ENCODE measurements at regions of chr11 and their contacts with region 1.

Region 1: GRCh38 chr11:107741044-107741823 is 29.4 kb upstream of the SLN start:
- DNase-seq: peak; percentile 25
- ATAC-seq: peak; percentile 98
- H3K4me3 ChIP-seq: no peak overlapping the region
- H3K27ac ChIP-seq: no peak overlapping the region
- H3K4me1 ChIP-seq: no peaks in the 10 kb centered on the region
- H3K27me3 ChIP-seq: no peaks in the 10 kb centered on the region
- CTCF ChIP-seq: peak; percentile 80 to 92 (median 87)
- EP300 ChIP-seq: no peak
- POLR2A ChIP-seq: no peak
- RAD21 ChIP-seq: peak; percentile 81

Region 2: GRCh38 chr11:106159836-106160235 is 1581.4 kb before region 1 on chr11:
- CTCF ChIA-PET with region 1: no interaction called
- POLR2A ChIA-PET with region 1: no interaction called
- RAD21 ChIA-PET with region 1: no interaction called
- SMC1A ChIA-PET with region 1: no interaction called
- in situ Hi-C with region 1: no loop called
- intact Hi-C with region 1: no loop called
- DNase-seq: no peak
- ATAC-seq: no peak
- H3K4me3 ChIP-seq: no peak overlapping the region
- H3K27ac ChIP-seq: no peak overlapping the region
- H3K4me1 ChIP-seq: no peaks in the 10 kb centered on the region
- H3K27me3 ChIP-seq: no peaks in the 10 kb centered on the region
- CTCF ChIP-seq: no peak
- EP300 ChIP-seq: no peak
- POLR2A ChIP-seq: no peak
- RAD21 ChIP-seq: no peak

Region 3: DNA sequence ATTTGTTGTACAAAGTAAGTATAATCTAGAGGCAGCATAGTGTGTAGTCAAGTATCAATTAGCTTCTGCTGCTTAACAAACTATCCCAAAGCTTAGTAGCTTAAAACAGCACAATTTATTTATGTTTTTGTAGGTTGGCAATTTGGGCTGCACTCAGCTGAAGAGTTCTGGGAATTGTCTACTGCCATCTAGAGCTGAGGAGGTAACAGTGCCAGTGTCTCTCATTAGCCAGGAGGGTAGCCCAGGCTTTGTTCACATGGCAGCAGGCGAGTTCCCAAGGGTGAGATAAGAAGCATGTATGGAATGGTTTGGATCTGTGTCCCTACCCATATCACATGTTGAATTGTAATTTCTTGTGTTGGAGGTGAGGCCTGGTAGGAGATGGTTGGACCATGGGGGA is 16.4 kb after region 1 on chr11:
- CTCF ChIA-PET with region 1: interaction called, 24 read pairs
- POLR2A ChIA-PET with region 1: no interaction called
- RAD21 ChIA-PET with region 1: interaction called, 5 read pairs
- SMC1A ChIA-PET with region 1: interaction called, 7 read pairs
- in situ Hi-C with region 1: no loop called
- intact Hi-C with region 1: no loop called
- DNase-seq: no peak
- ATAC-seq: peak; percentile 60; the same call in 2 of the 3 replicates
- H3K4me3 ChIP-seq: no peak overlapping the region
- H3K27ac ChIP-seq: no peak overlapping the region
- H3K4me1 ChIP-seq: no peaks in the 10 kb centered on the region
- H3K27me3 ChIP-seq: no peaks in the 10 kb centered on the region
- CTCF ChIP-seq: peak; percentile 20 to 22 (median 21); a peak in 4 of 6 replicates
- EP300 ChIP-seq: no peak
- POLR2A ChIP-seq: no peak
- RAD21 ChIP-seq: no peak

Region 4: GRCh38 chr11:107799218-107799859 is 58.1 kb after region 1 on chr11:
- CTCF ChIA-PET with region 1: interaction called, 44 read pairs
- POLR2A ChIA-PET with region 1: no interaction called
- RAD21 ChIA-PET with region 1: interaction called, 3 read pairs
- SMC1A ChIA-PET with region 1: interaction called, 16 read pairs
- in situ Hi-C with region 1: no loop called
- intact Hi-C with region 1: no loop called
- DNase-seq: peak; percentile 12
- ATAC-seq: peak; percentile 97
- H3K4me3 ChIP-seq: no peak overlapping the region
- H3K27ac ChIP-seq: no peak overlapping the region
- H3K4me1 ChIP-seq: no peaks in the 10 kb centered on the region
- H3K27me3 ChIP-seq: no peaks in the 10 kb centered on the region
- CTCF ChIP-seq: peak; percentile 91 to 96 (median 95)
- EP300 ChIP-seq: no peak
- POLR2A ChIP-seq: no peak
- RAD21 ChIP-seq: peak; percentile 71

Region 5: GRCh38 chr11:107898270-107898669 is 157.0 kb after region 1 on chr11:
- CTCF ChIA-PET with region 1: interaction called, 56 read pairs
- POLR2A ChIA-PET with region 1: no interaction called
- RAD21 ChIA-PET with region 1: interaction called, 13 read pairs
- SMC1A ChIA-PET with region 1: interaction called, 10 read pairs
- in situ Hi-C with region 1: loop called (anchors 5 kb)
- intact Hi-C with region 1: loop called (anchors 1 kb)
- DNase-seq: peak; percentile 24
- ATAC-seq: peak; percentile 93
- H3K4me3 ChIP-seq: no peak overlapping the region
- H3K27ac ChIP-seq: no peak overlapping the region
- H3K4me1 ChIP-seq: no peaks in the 10 kb centered on the region; the same call in 1 of the 2 replicates
- H3K27me3 ChIP-seq: no peaks in the 10 kb centered on the region
- CTCF ChIP-seq: peak; percentile 63 to 82 (median 67); a peak in 5 of 6 replicates
- EP300 ChIP-seq: no peak
- POLR2A ChIP-seq: no peak
- RAD21 ChIP-seq: peak; percentile 92

Region 6: DNA sequence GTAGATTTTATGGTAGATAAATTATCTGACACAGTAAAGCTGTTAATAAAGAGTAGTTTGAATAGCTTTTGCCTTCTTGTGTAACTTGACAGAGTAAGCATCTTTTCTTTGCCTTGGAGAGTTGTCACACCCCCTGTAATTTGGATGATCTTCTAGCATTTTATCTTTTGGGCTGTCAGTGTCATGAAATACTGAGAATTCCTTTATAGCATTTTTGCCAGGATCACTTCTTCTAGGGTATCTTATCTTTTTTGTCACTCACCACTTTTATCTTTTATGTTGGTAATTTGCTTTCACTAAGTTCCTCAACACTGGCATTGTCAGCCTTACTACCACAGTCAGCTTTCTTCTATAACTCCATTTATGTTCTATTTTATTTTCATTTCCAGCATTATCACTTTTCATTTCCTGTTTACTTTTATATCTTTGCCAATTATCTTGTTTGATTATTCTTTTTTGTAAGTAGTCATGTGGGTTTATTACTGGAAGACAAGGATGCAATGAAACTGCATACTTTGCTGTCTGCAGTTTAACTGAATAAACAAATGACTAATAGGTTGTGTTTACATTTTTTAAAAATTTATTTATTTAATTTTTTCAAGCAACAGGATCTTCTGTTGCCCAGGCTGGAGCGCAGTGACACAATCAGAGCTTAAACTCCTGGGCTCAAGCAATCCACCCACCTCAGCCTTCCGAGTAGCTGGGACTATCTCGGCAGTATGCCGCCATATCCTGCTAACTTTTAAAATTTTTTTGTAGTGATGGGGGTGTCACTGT is 352.1 kb after region 1 on chr11:
- CTCF ChIA-PET with region 1: no interaction called
- POLR2A ChIA-PET with region 1: no interaction called
- RAD21 ChIA-PET with region 1: no interaction called
- SMC1A ChIA-PET with region 1: no interaction called
- in situ Hi-C with region 1: no loop called
- intact Hi-C with region 1: no loop called
- DNase-seq: no peak
- ATAC-seq: no peak
- H3K4me3 ChIP-seq: no peak overlapping the region
- H3K27ac ChIP-seq: no peak overlapping the region
- H3K4me1 ChIP-seq: no peaks in the 10 kb centered on the region
- H3K27me3 ChIP-seq: no peaks in the 10 kb centered on the region
- CTCF ChIP-seq: no peak
- EP300 ChIP-seq: no peak
- POLR2A ChIP-seq: no peak
- RAD21 ChIP-seq: no peak

Measured in GM12878 (cell line).